ENCODE measurements at regions of chr20 and their contacts with region 1.

Region 1: DNA sequence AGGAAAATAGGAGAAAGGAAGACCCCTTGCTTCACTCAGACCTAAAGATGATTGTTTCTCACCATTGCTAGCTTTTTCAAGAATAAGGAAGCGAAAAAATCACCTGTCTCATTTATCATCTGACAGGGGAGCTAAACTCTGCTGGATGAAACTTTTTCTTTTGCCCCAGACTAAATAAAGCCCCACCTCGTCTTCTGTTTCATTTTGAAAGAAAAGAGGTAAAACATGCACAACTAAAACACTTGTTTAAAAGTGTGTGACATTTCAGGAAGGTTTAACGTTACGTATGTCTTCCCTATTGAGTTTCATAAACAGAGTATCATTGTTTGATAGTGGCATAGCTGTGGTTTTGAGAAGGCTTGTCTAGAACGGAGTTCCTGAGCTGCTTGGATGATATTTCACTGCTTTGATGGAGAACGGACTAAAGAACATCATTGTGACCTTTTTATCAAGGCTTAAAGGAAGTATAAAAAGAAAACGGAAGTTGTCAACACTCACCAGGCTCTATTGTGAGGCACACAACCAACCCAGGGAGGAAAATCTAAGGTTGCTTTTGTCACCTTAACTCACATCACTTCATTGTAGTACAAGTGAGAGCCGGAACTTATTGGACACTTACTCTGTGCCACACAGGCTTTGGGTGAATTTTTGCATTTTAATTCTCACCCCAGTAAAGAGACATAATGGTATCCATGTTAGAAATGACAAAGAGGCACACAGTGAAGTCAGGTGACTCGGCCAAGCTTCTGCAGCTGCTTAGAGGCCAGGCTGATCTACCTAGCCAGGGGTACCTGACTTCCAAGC is 29.5 kb downstream of the TSHZ2 start:
- DNase-seq: no peak
- H3K4me3 Mint-ChIP-seq: peak overlapping the region; percentile 55
- H3K27ac Mint-ChIP-seq: peak overlapping the region; percentile 88
- H3K4me1 Mint-ChIP-seq: peaks cover 25% of the 10 kb centered on the region
- H3K27me3 Mint-ChIP-seq: no peaks in the 10 kb centered on the region

Region 2: DNA sequence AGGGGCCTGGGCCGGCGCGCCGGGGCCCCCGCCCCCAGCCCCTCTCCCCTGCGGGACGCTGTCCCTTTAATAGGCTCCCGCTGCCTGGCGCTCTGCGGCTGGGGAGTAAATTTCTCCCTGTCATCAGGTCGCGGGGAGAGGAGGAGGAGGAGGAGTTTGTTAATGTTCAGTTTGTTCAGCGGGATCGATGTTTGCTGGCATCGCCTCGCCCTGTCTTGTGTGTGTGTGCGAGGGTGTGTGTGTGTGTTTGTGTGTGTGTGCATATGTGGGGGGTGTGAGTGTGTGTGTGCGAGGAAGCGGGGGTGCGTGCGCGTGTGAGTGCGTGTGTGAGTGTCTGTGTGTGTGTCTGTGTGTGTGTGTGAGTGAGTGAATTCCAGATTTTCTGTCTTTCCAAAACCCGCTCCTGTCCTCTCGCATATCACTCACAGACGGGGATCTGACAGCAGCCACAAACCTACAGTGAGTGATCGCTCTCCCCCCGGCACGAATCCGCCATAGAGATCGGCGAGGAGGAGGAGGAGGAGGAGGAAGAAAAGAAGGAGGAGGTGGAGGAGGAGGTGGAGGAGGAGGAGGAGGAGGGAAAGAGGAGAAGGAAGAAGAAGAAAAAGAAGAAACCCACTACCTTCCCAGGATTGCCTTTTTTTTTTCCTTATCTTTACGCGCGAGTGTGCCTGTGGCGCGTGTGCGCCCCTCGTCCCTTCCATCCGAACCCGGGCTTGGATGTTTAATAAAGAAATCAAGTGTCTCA is 29.3 kb before region 1 on chr20 and contains the start of gene TSHZ2:
- CTCF ChIA-PET with region 1: no interaction called
- POLR2A ChIA-PET with region 1: interaction called, 13 read pairs
- DNase-seq: peak; percentile 52
- H3K4me3 Mint-ChIP-seq: peak within 1 kb of the TSS; percentile 97
- H3K27ac Mint-ChIP-seq: peak within 1 kb of the TSS; percentile 80
- H3K4me1 Mint-ChIP-seq: peaks cover 38% of the 10 kb centered on the region
- H3K27me3 Mint-ChIP-seq: peaks cover 26% of the 10 kb centered on the region
- total RNA-seq, gene TSHZ2: 5.4 to 7.1 TPM

Region 3: DNA sequence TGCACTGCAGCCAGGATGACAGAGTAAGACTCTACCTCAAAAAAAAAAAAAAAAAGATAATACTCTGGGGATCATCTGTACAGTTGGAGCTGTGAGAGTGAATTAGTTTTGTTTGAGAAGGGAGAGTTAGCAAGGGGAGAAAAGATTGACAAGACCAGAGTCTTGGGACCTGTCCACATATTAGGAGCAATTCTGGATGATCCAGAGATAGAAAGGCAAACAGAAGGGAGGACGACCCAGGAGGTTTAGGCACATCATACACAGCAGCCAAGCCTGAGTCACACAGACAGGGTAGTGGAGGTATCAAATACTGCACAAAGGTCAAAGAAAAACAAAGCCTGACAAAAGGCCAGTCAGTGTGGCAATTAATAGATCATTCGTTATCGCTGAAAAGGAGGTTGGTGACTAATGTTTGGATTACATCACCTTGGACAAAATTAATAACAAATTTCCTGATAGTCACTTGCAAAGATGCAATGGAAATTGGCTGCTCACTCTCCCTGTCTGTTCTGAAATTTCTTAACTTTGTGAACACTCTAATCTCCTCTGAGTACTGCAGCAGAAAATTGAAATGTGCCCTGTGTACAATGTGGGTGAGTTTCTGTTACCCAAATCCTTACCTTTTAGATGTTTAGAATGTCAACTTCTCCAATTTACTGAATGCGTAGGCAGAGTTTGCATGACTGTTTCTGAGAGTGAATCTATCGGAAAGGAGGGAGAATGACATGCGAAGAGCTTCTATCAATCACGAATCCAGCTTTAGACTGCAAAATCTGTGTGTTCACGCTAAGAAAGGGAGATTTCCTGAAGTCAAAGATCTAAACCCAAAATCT is 75.9 kb after region 1 on chr20:
- CTCF ChIA-PET with region 1: no interaction called
- POLR2A ChIA-PET with region 1: no interaction called
- DNase-seq: no peak
- H3K4me3 Mint-ChIP-seq: no peak overlapping the region
- H3K27ac Mint-ChIP-seq: no peak overlapping the region
- H3K4me1 Mint-ChIP-seq: peaks cover 29% of the 10 kb centered on the region
- H3K27me3 Mint-ChIP-seq: no peaks in the 10 kb centered on the region

Region 4: GRCh38 chr20:53126185-53126584 is 124.5 kb after region 1 on chr20:
- CTCF ChIA-PET with region 1: no interaction called
- POLR2A ChIA-PET with region 1: no interaction called
- DNase-seq: no peak
- H3K4me3 Mint-ChIP-seq: no peak overlapping the region
- H3K27ac Mint-ChIP-seq: no peak overlapping the region
- H3K4me1 Mint-ChIP-seq: peaks cover 9% of the 10 kb centered on the region
- H3K27me3 Mint-ChIP-seq: no peaks in the 10 kb centered on the region

Region 5: GRCh38 chr20:53454675-53455276 is 453.1 kb after region 1 on chr20:
- CTCF ChIA-PET with region 1: no interaction called
- POLR2A ChIA-PET with region 1: no interaction called
- DNase-seq: no peak
- H3K4me3 Mint-ChIP-seq: no peak overlapping the region
- H3K27ac Mint-ChIP-seq: no peak overlapping the region
- H3K4me1 Mint-ChIP-seq: no peaks in the 10 kb centered on the region
- H3K27me3 Mint-ChIP-seq: no peaks in the 10 kb centered on the region

Measured in activated CD4-positive, alpha-beta memory T cell treated with anti-CD3 and anti-CD28 coated beads, Interleukin-2, amount 10 ng/mL, durations not matched to agents 7 days and 5 days (primary cell).